AG04450 (cell line): ENCODE measurements at regions of chr10 and their contacts with region 1.

Region 1: GRCh38 chr10:110547139-110547761 is 20.2 kb upstream of the SMC3 start:
- DNase-seq: no peak
- H3K4me3 ChIP-seq: no peak overlapping the region
- H3K27ac ChIP-seq: no peak overlapping the region
- H3K27me3 ChIP-seq: no peaks in the 10 kb centered on the region
- CTCF ChIP-seq: peak; percentile 83

Region 2: DNA sequence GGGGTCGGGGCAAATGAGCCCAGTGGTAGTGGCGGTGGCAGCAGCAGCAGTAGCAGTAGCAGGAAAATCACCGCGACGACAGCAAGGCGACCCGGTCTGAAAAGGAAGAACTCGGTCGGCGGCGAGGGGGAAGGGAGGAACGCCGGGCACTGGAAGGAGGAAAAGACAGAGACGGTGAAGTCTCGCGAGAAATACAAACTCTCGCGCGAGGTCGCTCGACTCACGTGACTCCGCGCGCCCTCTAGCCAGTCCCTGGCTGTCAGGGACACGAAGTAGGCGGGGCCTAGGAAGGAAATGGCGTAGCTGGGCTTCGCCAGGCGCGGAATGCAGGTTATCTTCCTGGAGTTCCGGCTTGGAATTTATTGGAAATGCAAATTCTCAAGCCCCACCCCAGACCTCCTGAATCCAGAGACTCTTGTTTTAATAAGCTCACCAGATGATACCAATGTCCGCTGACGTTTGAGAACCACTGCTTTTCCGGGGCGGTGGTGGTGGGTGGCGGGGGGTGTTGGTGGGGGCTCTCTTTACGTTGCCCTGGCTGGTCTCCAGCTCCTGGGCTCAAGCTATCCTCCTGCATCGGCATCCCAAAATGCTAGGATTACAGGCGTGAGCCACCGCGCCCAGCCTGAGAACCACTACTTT is 242.3 kb before region 1 on chr10 and contains the start of gene SMNDC1:
- CTCF ChIA-PET with region 1: interaction called, 141 read pairs
- POLR2A ChIA-PET with region 1: no interaction called
- DNase-seq: peak; percentile 95
- H3K4me3 ChIP-seq: peak within 1 kb of the TSS; percentile 80
- H3K27ac ChIP-seq: peak within 1 kb of the TSS; percentile 92
- H3K27me3 ChIP-seq: no peaks in the 10 kb centered on the region
- CTCF ChIP-seq: no peak
- polyA plus RNA-seq, gene SMNDC1: 20.1 and 26.4 TPM in 2 replicates

Region 3: DNA sequence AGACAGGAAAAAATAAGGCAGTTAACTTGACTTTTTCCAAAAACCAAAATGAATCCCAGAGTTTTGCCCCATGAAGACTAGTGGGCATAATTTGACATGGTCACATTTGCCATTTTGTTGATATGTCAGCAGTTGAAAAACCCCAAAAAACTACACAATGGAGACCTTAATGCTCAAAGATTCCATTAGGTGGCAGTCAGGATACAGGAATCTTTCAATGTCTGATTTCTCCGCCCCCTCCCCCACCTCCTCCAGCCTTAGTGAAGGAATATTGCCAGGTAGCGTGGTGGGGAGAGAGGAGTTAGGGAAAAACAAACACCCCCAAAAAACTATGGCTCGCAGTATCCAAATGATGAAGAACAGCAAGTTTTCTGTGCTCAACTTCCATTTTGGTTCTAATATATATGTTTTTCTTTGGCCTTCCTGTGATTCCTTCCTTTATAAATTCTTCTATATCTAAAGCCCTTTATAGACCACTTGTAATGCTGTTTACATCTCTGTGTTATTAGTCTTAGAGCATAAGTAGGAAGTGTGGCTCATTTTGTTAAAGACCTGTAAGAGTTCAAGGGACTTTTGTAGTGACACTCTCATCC is 235.8 kb before region 1 on chr10:
- CTCF ChIA-PET with region 1: interaction called, 141 read pairs
- POLR2A ChIA-PET with region 1: no interaction called
- DNase-seq: peak; percentile 26
- H3K4me3 ChIP-seq: no peak overlapping the region
- H3K27ac ChIP-seq: no peak overlapping the region
- H3K27me3 ChIP-seq: no peaks in the 10 kb centered on the region
- CTCF ChIP-seq: peak; percentile 73

Region 4: GRCh38 chr10:110354322-110354766 is 192.9 kb before region 1 on chr10:
- CTCF ChIA-PET with region 1: interaction called, 52 read pairs
- POLR2A ChIA-PET with region 1: no interaction called
- DNase-seq: peak; percentile 59
- H3K4me3 ChIP-seq: no peak overlapping the region
- H3K27ac ChIP-seq: peak overlapping the region; percentile 96
- H3K27me3 ChIP-seq: no peaks in the 10 kb centered on the region
- CTCF ChIP-seq: peak; percentile 82

Region 5: DNA sequence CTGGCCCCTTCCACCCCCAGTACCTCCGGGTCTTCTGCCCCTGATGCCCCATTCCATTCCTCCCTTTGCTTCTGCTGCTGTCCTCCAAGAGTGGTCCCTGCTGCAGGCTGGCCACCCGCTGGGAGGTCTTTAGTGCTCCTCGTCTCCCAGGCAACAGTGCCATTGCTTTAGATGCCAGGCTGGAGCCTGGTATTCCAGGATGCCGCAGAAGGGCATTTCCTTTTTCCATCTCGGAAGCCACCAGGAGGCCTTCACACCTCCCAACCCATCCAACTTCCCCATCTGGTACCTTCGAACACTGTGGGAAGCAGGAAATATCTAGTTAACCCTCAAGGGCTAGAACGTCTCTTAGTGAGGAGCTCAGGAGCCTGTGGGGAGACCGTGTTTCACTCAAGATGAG is 142.4 kb before region 1 on chr10:
- CTCF ChIA-PET with region 1: no interaction called
- POLR2A ChIA-PET with region 1: no interaction called
- DNase-seq: no peak
- H3K4me3 ChIP-seq: no peak overlapping the region
- H3K27ac ChIP-seq: no peak overlapping the region
- H3K27me3 ChIP-seq: no peaks in the 10 kb centered on the region
- CTCF ChIP-seq: no peak

Region 6: GRCh38 chr10:110512461-110513187 is 34.6 kb before region 1 on chr10:
- CTCF ChIA-PET with region 1: interaction called, 10 read pairs
- POLR2A ChIA-PET with region 1: no interaction called
- DNase-seq: peak; percentile 74
- H3K4me3 ChIP-seq: no peak overlapping the region
- H3K27ac ChIP-seq: peak overlapping the region; percentile 90
- H3K27me3 ChIP-seq: no peaks in the 10 kb centered on the region
- CTCF ChIP-seq: no peak

Region 7: GRCh38 chr10:110563132-110563531 is 15.9 kb after region 1 on chr10:
- CTCF ChIA-PET with region 1: interaction called, 14 read pairs
- POLR2A ChIA-PET with region 1: no interaction called
- DNase-seq: no peak
- H3K4me3 ChIP-seq: no peak overlapping the region
- H3K27ac ChIP-seq: no peak overlapping the region
- H3K27me3 ChIP-seq: no peaks in the 10 kb centered on the region
- CTCF ChIP-seq: no peak

Region 8: GRCh38 chr10:110600487-110601101 is 53.3 kb after region 1 on chr10:
- CTCF ChIA-PET with region 1: interaction called, 14 read pairs
- POLR2A ChIA-PET with region 1: no interaction called
- DNase-seq: peak; percentile 38
- H3K4me3 ChIP-seq: no peak overlapping the region
- H3K27ac ChIP-seq: no peak overlapping the region
- H3K27me3 ChIP-seq: no peaks in the 10 kb centered on the region
- CTCF ChIP-seq: peak; percentile 54